H1 (cell line): ENCODE measurements at regions of chr3 and their contacts with region 1.

Region 1: DNA sequence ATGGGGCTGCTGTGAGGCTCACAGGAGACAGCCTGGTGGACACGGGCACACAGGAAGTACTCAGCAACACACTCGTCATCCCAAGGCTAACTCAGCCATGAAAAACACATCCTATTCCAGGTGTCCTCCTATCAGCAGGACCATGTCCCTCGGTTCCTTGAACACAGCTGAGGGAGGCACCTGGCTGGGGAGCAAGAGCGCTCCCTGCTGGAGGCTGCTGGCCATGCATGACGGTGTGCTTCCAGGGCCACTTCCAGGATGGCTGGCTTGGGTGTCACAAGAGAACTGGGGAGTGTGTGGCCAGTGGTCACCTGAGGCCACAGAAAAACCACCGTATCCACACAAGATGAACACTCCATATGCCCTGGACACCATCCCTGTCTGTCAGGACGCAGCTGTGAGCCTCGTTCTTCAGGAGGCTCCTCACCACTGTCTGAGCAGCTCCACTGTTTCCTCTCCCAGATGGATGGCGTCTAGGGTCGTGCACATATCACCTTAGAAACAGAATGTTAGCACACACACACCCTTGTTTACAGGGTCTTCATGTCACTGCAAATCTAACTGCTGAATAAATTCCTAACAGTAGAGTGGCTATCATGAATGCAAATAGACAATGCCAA is 31.0 kb downstream of the POC1A start:
- DNase-seq: peak; percentile 33 to 92
- H3K4me3 ChIP-seq: no peak overlapping the region
- H3K27ac ChIP-seq: no peak overlapping the region
- H3K4me1 ChIP-seq: no peaks in the 10 kb centered on the region
- H3K27me3 ChIP-seq: no peaks in the 10 kb centered on the region
- CTCF ChIP-seq: peak; percentile 95 to 100 (median 100)
- EP300 ChIP-seq: no peak
- POLR2A ChIP-seq: no peak
- RAD21 ChIP-seq: peak; percentile 92 to 93

Region 2: DNA sequence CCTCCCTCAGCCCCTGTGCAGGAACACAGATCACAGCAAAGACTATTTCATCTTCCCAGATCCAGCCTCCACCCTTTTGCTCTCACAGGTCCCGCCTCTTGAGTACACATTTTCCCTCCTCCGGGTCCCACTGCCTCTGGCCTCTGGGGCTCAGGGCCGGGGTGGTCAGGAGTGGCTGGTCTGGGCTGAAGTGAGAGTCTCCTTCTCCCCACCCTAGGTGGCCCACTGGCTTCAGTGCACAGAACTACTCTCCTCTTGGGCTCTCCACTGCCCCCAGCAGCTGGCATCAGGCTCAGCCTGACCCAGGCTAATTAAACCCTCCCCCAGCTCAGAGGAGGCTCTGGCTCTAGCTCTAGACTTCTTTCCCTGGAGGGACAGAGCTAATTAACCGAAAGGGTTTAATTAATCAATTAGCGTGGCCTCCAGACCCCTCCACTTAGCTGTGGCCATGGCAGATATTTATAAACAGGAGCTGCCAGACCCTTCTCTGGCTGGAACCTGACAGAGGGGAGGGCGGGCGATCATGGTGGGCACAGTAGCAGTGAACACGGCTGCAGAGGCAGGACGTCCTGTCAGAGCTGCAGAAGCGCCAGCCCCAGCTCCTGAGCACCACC is 82.0 kb before region 1 on chr3:
- CTCF ChIA-PET with region 1: interaction called, 48 read pairs
- POLR2A ChIA-PET with region 1: no interaction called
- DNase-seq: no peak
- H3K4me3 ChIP-seq: no peak overlapping the region
- H3K27ac ChIP-seq: no peak overlapping the region
- H3K4me1 ChIP-seq: peaks cover 0 to 12% (median 4%) of the 10 kb centered on the region in 4 experiments; a peak in 5 of 7 replicates
- H3K27me3 ChIP-seq: no peaks in the 10 kb centered on the region
- CTCF ChIP-seq: peak in 2 of 3 experiments; percentile 51 to 56; a peak in 3 of 4 replicates
- EP300 ChIP-seq: no peak
- POLR2A ChIP-seq: no peak
- RAD21 ChIP-seq: peak; percentile 27 to 39; a peak in 2 of 4 replicates

Region 3: GRCh38 chr3:52090131-52090932 is 32.9 kb before region 1 on chr3:
- CTCF ChIA-PET with region 1: interaction called, 24 read pairs
- POLR2A ChIA-PET with region 1: no interaction called
- DNase-seq: no peak
- H3K4me3 ChIP-seq: no peak overlapping the region
- H3K27ac ChIP-seq: no peak overlapping the region
- H3K4me1 ChIP-seq: peaks cover 0 to 2% (median 0%) of the 10 kb centered on the region in 4 experiments; a peak in 2 of 7 replicates
- H3K27me3 ChIP-seq: no peaks in the 10 kb centered on the region
- CTCF ChIP-seq: no peak
- EP300 ChIP-seq: no peak
- POLR2A ChIP-seq: no peak
- RAD21 ChIP-seq: no peak

Region 4: DNA sequence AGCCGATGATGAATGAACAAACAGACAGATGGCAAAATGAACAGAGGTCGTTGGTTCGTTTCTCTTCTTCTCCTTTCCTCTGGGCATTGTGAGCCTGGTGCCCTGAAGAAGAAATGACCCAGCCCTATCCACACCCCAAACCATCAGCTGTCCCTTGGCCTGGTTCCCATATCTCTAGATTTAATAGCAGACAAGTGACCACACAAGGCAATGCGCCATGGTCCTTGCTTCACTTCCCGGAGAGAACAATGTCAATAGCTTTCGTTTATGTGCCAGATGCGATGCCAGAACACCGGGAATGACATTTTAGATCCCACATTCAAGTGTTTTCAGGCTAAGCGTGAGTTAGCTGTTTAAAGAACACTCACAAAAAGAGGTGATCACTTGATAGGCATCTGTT is 13.3 kb after region 1 on chr3:
- CTCF ChIA-PET with region 1: interaction called, 19 read pairs
- POLR2A ChIA-PET with region 1: interaction called, 6 read pairs
- DNase-seq: no peak
- H3K4me3 ChIP-seq: no peak overlapping the region
- H3K27ac ChIP-seq: no peak overlapping the region
- H3K4me1 ChIP-seq: no peaks in the 10 kb centered on the region
- H3K27me3 ChIP-seq: no peaks in the 10 kb centered on the region
- CTCF ChIP-seq: no peak
- EP300 ChIP-seq: no peak
- POLR2A ChIP-seq: no peak
- RAD21 ChIP-seq: no peak